ENCODE measurements at regions of chr15 and their contacts with region 1.

Region 1: GRCh38 chr15:99578809-99579208 is 13.0 kb downstream of the MEF2A start:
- DNase-seq: no peak
- ATAC-seq: no peak
- H3K4me3 ChIP-seq: no peak overlapping the region
- H3K27ac ChIP-seq: peak overlapping the region in 2 of 12 donors; percentile 8 to 12
- H3K4me1 ChIP-seq: peaks cover 13 to 98% (median 75%) of the 10 kb centered on the region in 12 donors
- H3K27me3 ChIP-seq: no peaks in the 10 kb centered on the region
- CTCF ChIP-seq: no peak
- POLR2A ChIP-seq: no peak

Region 2: DNA sequence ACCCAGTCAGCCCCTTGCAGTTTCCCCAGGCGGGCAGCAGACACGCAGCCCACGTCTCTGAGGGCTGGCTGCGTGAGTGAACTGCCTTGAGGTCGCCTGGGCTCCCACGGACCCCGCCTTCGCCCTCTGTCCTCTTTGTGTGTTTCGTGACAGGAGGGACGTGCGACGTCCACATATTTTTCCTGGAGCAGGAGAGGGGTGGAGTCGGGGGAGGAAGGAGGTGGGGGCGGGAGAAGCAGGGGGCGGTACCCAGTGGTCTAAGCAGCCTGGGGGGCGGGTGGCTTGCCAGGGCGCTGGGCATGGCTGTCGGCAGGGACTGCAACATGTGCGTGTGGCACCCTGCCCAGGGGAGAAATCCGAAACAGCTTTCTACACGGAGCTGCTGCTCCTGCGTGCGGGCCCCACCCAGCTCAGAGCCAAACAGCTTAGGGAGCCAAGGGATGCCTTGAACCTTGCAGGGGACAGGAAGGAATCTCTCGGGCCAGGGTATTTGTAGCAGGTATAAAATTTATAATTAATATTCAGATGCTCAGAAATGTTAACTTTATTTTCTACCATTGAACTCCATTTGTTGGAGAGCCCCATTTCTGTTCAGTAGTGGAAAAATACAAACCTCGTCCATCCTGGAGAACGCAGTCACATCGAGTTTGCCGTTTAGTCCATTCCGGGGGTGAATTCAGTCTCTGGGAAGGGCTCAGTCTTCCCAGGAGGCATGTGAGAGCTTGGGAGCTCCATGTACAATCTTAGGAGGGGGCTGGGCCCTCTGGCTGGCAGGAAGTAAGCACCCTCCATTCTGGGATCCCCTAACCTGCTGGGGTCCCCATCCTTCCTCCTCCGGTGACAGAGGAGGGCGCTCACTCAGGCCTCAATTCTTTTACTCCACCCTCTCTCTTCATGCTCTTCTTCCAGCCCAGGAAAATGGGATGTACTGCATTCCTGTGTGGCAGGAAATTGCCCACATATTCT is 92.2 kb before region 1 on chr15:
- intact Hi-C with region 1: no loop called
- DNase-seq: peak; percentile 84 to 94 (median 93)
- ATAC-seq: peak; percentile 84 to 94 (median 93)
- H3K4me3 ChIP-seq: peak overlapping the region in 10 of 12 donors; percentile 13 to 56 (median 46)
- H3K27ac ChIP-seq: peak overlapping the region; percentile 20 to 91 (median 82)
- H3K4me1 ChIP-seq: peaks cover 0 to 35% (median 27%) of the 10 kb centered on the region in 12 donors
- H3K27me3 ChIP-seq: no peaks in the 10 kb centered on the region
- CTCF ChIP-seq: no peak
- POLR2A ChIP-seq: peak in 1 of 2 donors; percentile 34

Region 3: DNA sequence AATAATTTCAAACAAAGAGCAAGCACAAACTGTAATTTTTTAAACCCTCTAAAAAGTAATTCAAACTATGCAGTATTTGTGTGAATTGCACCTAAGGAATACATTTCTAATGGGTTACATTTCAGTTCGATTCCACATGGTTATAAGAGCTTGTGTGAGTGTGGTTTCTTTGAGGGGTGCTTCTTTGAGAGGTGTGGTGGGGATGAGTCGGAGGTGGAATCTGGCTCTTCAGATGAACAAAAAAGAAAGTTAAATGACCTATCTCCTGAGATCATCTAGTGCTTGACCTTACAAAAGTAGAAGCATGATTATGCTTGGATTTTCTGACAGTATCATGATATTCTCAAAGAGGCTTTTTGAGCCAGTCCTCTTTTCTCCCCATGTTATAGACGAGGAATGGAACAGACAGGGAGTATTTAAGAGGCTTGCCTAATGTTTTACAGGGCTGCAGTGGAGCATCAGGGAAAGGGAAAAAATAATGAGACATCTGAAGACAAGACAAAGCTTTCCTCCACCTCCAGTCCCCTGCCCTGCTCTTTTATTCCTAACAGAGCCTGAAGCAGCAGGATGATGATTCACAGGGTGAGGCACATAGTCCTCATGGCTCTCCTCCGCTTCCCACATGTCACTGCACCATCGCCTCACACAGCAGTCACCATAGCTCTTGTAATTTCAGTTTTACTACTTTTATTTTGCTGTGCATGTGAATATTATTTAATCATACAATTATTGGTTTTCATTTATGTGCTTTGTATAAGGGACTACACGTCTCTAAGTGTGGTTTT is 72.4 kb after region 1 on chr15:
- intact Hi-C with region 1: loop called in 2 of 10 experiments (anchors 10 kb)
- DNase-seq: no peak
- ATAC-seq: peak in 2 of 4 donors; percentile 56 to 64
- H3K4me3 ChIP-seq: no peak overlapping the region
- H3K27ac ChIP-seq: no peak overlapping the region
- H3K4me1 ChIP-seq: peaks cover 0 to 8% (median 1%) of the 10 kb centered on the region in 12 donors
- H3K27me3 ChIP-seq: no peaks in the 10 kb centered on the region
- CTCF ChIP-seq: no peak
- POLR2A ChIP-seq: no peak

Region 4: DNA sequence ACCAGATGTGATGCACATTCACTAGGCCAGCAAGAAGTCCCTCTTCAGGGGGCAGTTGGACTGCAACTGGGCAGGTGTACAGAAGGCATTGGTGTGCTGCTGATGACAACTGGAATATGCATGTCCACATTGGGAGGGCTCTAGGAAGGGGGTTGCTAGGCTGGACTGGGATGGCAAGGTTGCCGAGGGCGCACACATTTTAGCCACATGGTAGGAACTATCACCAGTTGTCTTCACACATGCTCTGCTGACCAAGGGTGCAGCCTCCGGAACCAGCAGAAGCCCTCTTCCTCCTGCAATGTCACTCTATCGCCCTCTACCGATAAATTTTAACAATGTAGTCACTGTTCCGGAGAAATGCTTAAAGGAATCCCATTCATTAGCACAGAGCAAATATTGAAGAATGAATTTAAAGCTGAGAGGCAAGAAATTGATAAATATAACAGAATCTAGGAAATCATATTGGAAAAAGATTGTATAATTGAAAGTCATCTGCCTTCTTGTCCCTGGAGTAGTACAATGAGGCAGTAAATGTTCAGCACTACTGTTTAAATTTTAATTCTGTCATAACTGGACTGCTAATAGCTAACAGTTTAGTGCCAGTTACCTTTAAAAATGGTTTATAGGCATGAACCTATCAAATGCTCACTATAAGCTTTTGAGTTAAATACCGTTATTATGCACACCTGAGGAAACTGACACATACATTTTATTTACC is 177.0 kb after region 1 on chr15:
- intact Hi-C with region 1: no loop called
- DNase-seq: peak; percentile 45 to 60 (median 55)
- ATAC-seq: peak; percentile 73 to 91 (median 88)
- H3K4me3 ChIP-seq: no peak overlapping the region
- H3K27ac ChIP-seq: no peak overlapping the region
- H3K4me1 ChIP-seq: peaks cover 0 to 4% (median 0%) of the 10 kb centered on the region in 12 donors
- H3K27me3 ChIP-seq: no peaks in the 10 kb centered on the region
- CTCF ChIP-seq: peak; percentile 78 to 92 (median 88)
- POLR2A ChIP-seq: no peak

Measured in heart left ventricle (tissue), 16 donors.